Endothelial cell of umbilical vein (primary cell): ENCODE measurements at regions of chr6 and their contacts with region 1.

Region 1: GRCh38 chr6:152094992-152095592 is 287.6 kb downstream of the ESR1 start:
- DNase-seq: peak; percentile 97
- H3K4me3 ChIP-seq: no peak overlapping the region
- H3K27ac ChIP-seq: peak overlapping the region; percentile 74
- H3K4me1 ChIP-seq: peaks cover 42% of the 10 kb centered on the region
- H3K27me3 ChIP-seq: no peaks in the 10 kb centered on the region
- CTCF ChIP-seq: no peak
- POLR2A ChIP-seq: no peak

Region 2: GRCh38 chr6:151974061-151974617 is 121.0 kb before region 1 on chr6:
- CTCF ChIA-PET with region 1: no interaction called
- POLR2A ChIA-PET with region 1: no interaction called
- dilution Hi-C with region 1: no loop called
- intact Hi-C with region 1: loop called (anchors 5 kb)
- DNase-seq: peak; percentile 56
- H3K4me3 ChIP-seq: no peak overlapping the region
- H3K27ac ChIP-seq: peak overlapping the region; percentile 9
- H3K4me1 ChIP-seq: peaks cover 16% of the 10 kb centered on the region
- H3K27me3 ChIP-seq: no peaks in the 10 kb centered on the region
- CTCF ChIP-seq: no peak
- POLR2A ChIP-seq: no peak

Region 3: DNA sequence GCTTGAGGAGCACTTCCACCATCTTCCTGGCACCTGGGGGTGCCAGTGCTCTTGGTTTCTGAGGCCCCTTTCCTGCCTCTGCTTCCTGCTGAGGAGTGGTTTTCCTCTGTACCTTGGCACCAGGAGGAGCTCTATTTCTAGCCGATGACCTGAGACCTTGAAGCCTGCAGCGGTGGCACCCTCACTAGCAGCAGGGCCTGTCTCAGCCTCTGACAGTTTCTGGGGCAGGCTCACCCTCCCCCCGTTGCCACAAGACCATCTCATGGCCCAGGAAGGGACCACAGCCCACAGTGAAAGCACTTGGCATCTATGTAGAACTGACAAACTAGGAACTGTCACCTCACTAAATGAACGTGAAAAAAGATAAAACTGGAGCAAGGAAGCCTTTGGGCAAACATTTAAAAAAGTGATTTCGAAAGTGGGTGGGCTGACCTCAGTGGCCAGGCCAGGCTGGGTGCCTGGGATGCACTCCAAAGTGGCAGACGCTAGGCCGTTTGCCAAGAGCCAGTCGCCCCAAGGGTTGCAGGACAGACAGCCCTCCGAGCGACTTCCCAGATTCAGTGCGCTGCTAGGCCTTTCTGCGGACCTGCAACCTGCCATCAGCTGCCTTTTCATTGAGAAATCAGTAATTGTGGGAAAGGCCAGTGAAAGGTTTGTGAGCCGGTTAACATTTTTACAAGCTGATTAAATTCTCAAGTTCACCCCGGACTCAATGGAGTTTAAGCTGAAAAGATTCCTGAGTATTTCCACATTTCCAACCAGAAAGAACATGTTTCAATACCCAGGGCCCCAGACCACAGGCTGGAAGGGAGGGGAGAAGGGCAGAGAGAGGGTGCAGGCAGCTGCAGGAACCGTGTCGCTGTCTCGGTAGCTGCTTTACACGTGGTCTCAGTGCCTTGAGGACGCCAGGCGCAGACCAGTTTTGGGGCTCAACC is 16.1 kb after region 1 on chr6:
- CTCF ChIA-PET with region 1: interaction called, 8 read pairs
- POLR2A ChIA-PET with region 1: no interaction called
- dilution Hi-C with region 1: no loop called
- intact Hi-C with region 1: loop called (anchors 1 kb)
- DNase-seq: no peak
- H3K4me3 ChIP-seq: no peak overlapping the region
- H3K27ac ChIP-seq: no peak overlapping the region
- H3K4me1 ChIP-seq: peaks cover 3% of the 10 kb centered on the region
- H3K27me3 ChIP-seq: no peaks in the 10 kb centered on the region
- CTCF ChIP-seq: no peak
- POLR2A ChIP-seq: no peak